ENCODE measurements at regions of chr5 and their contacts with region 1.

Region 1: DNA sequence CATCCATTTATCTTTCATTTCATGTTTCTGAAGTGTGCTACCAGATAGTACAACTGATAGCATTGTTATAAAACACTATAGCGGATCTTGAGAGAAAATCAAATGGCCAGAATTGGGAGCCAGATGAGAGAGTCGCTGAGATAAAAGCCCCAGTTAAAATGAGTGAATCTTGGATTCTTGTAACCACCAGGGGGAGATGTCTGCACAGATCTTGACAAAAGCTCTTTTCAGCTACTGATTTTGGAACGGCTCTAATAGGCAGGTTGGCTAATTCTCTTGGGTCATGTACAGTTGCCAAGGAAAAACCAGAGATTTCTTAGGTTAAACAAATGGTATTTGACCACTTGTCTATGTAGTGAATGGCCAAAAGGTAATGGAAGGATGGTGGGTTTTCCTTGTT is 21.7 kb downstream of the F2RL2 start:
- DNase-seq: peak; percentile 68 to 81 (median 80)
- H3K4me3 ChIP-seq: no peak overlapping the region
- H3K27ac ChIP-seq: no peak overlapping the region
- H3K4me1 ChIP-seq: peaks cover 0 to 2% (median 0%) of the 10 kb centered on the region in 4 experiments
- H3K27me3 ChIP-seq: no peaks in the 10 kb centered on the region

Region 2: DNA sequence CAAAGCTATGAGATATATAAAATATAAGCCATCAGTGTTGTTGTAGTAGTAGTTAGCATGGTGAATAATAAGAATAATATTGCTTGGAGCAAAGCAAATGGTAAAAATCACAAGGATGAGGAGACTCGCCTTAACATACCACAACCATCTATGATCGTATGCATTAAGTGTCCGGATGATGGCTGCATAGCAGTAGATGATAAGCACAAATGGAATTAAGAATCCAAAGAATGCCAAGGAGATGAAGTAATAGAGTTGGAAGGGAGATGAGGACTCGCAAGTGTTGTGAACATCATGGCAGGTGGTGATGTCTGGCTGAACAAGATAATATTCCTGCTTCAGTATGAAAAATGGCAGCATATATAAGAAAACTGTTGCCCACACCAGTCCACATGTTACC is 16.2 kb after region 1 on chr5:
- CTCF ChIA-PET with region 1: interaction called, 14 read pairs
- POLR2A ChIA-PET with region 1: no interaction called
- DNase-seq: no peak
- H3K4me3 ChIP-seq: no peak overlapping the region
- H3K27ac ChIP-seq: no peak overlapping the region
- H3K4me1 ChIP-seq: peaks cover 0 to 24% (median 3%) of the 10 kb centered on the region in 4 experiments
- H3K27me3 ChIP-seq: no peaks in the 10 kb centered on the region

Measured in common myeloid progenitor, CD34-positive (primary cell).